Activated CD4-positive, alpha-beta T cell treated with anti-CD3 and anti-CD28 coated beads, Interleukin-2, amount 10 ng/mL, durations not matched to agents 24 days and 14 days (primary cell): ENCODE measurements at regions of chr20 and their contacts with region 1.

Region 1: DNA sequence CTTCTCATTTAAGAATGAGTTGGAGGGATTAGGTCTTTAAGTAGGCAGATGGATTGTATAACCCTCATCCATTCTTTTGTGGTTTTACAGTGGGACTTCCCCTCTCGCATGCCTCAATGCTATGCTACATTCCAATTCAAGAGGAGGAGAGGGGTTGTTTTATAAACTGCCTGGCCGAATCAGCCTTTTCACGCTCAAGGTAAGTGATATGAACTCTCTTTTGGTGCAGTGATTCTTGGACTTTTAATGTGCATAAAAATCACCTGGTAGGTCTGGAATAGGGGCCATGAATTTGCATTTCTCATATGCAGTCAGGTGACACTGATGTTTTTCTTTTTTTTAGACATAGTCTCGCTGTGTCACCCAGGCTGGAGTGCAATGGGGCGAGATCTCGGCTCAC is 10.8 kb downstream of the ASXL1 start:
- DNase-seq: no peak
- H3K4me3 Mint-ChIP-seq: no peak overlapping the region
- H3K27ac Mint-ChIP-seq: peak overlapping the region; percentile 36
- H3K4me1 Mint-ChIP-seq: peaks cover 38% of the 10 kb centered on the region
- H3K27me3 Mint-ChIP-seq: no peaks in the 10 kb centered on the region

Region 2: DNA sequence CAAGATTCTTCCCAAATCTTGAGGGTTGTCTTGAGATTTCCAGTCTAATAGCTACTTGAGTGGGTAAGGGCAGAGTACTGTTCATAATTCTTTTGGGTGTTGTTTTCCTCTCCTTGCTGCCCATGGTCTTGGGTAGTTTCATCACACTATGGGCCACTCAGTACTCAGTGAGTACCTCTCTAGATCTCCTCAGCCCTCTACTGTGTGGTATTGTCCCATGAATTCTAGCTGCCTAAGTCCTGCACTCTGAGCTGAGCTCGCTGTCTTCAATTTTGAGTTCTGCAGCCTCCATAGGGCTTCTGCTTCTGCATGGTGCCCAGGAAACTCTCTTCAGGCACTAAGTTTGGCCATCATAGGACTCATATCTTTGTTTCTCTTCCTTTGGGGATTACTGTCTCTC is 31.6 kb after region 1 on chr20:
- intact Hi-C with region 1: loop called (anchors 5 kb)
- DNase-seq: peak; percentile 43
- H3K4me3 Mint-ChIP-seq: no peak overlapping the region
- H3K27ac Mint-ChIP-seq: no peak overlapping the region
- H3K4me1 Mint-ChIP-seq: peaks cover 25% of the 10 kb centered on the region
- H3K27me3 Mint-ChIP-seq: no peaks in the 10 kb centered on the region